ENCODE measurements at regions of chr7 and their contacts with region 1.

Region 1: GRCh38 chr7:149838224-149838947 is at the start of gene ZNF862:
- DNase-seq: peak; percentile 96 to 98 (median 96)
- H3K4me3 ChIP-seq: peak within 1 kb of the TSS; percentile 82
- H3K27ac ChIP-seq: peak within 1 kb of the TSS; percentile 73 to 94
- H3K4me1 ChIP-seq: peaks cover 3% of the 10 kb centered on the region
- H3K27me3 ChIP-seq: no peaks in the 10 kb centered on the region
- CTCF ChIP-seq: peak in 1 of 3 donors; percentile 26
- EP300 ChIP-seq: no peak
- POLR2A ChIP-seq: peak; percentile 68
- total RNA-seq, gene ZNF862: 13.6 to 29.8 (median 22.8) TPM

Region 2: GRCh38 chr7:149497456-149498261 is 340.7 kb before region 1 on chr7 and contains the start of gene ZNF746:
- intact Hi-C with region 1: loop called in 1 of 4 experiments (anchors 5 kb)
- DNase-seq: peak; percentile 55 to 77 (median 65)
- H3K4me3 ChIP-seq: peak within 1 kb of the TSS; percentile 59
- H3K27ac ChIP-seq: peak within 1 kb of the TSS; percentile 93 to 94
- H3K4me1 ChIP-seq: peaks cover 6% of the 10 kb centered on the region
- H3K27me3 ChIP-seq: no peaks in the 10 kb centered on the region
- CTCF ChIP-seq: peak in 2 of 3 donors; percentile 59 to 72
- EP300 ChIP-seq: no peak
- POLR2A ChIP-seq: peak; percentile 32
- total RNA-seq, gene ZNF746: 13.1 to 19.3 (median 17.4) TPM

Region 3: GRCh38 chr7:149783386-149784250 is 54.8 kb before region 1 on chr7:
- intact Hi-C with region 1: loop called in 1 of 4 experiments (anchors 5 kb)
- DNase-seq: no peak
- H3K4me3 ChIP-seq: no peak overlapping the region
- H3K27ac ChIP-seq: no peak overlapping the region
- H3K4me1 ChIP-seq: no peaks in the 10 kb centered on the region
- H3K27me3 ChIP-seq: no peaks in the 10 kb centered on the region
- CTCF ChIP-seq: no peak
- EP300 ChIP-seq: no peak
- POLR2A ChIP-seq: no peak

Measured in ovary (tissue), 10 donors.